Endothelial cell of umbilical vein (primary cell): ENCODE measurements at regions of chr6 and their contacts with region 1.

Region 1: DNA sequence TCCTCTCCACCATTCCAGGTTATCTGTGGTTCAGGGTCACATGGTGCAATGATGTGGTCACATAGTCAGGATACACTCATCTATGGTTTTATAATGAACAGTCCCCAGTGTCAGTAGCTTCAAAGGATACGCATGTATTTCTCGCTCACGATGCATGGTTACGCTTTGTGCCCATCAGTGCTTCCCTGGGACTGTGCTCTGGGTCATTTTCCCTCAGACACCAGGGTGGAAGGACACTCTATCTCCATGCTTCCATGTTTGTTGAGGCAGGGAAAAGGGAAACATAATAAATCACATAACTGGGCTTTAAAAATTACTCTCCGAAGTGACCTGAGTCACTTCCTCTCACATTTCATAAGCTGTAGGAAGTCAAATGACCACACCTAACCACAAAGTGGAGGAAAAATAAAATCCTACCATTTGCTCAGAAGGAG is 394.8 kb upstream of the NOX3 start:
- DNase-seq: peak; percentile 80
- H3K4me3 ChIP-seq: no peak overlapping the region
- H3K27ac ChIP-seq: peak overlapping the region; percentile 0
- H3K4me1 ChIP-seq: peaks cover 14% of the 10 kb centered on the region
- H3K27me3 ChIP-seq: no peaks in the 10 kb centered on the region
- CTCF ChIP-seq: no peak
- POLR2A ChIP-seq: no peak

Region 2: GRCh38 chr6:155828989-155829388 is 21.4 kb before region 1 on chr6:
- CTCF ChIA-PET with region 1: no interaction called
- POLR2A ChIA-PET with region 1: no interaction called
- dilution Hi-C with region 1: no loop called
- intact Hi-C with region 1: no loop called
- DNase-seq: no peak
- H3K4me3 ChIP-seq: no peak overlapping the region
- H3K27ac ChIP-seq: no peak overlapping the region
- H3K4me1 ChIP-seq: no peaks in the 10 kb centered on the region
- H3K27me3 ChIP-seq: no peaks in the 10 kb centered on the region
- CTCF ChIP-seq: no peak
- POLR2A ChIP-seq: no peak

Region 3: DNA sequence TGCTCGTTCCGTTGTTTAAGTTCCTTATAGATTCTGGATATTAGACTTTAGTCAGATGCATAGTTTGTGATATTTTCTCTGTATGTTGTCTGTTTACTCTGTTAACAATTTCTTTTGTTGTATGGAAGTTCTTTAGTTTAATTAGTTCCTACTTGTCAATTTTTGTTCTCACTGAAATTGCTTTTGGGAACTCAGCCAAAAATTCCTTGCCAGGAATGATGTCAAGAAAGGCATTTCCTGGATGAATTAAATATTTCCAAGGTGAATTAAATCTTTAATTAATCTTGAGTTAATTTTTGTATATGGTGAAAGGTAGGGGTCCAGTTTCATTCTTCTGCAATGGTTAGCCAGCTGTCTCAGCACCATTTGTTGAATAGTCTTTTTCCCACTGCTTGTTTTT is 11.4 kb after region 1 on chr6:
- CTCF ChIA-PET with region 1: no interaction called
- POLR2A ChIA-PET with region 1: no interaction called
- dilution Hi-C with region 1: no loop called
- intact Hi-C with region 1: loop called (anchors 1 kb)
- DNase-seq: peak; percentile 56
- H3K4me3 ChIP-seq: no peak overlapping the region
- H3K27ac ChIP-seq: no peak overlapping the region
- H3K4me1 ChIP-seq: peaks cover 4% of the 10 kb centered on the region
- H3K27me3 ChIP-seq: no peaks in the 10 kb centered on the region
- CTCF ChIP-seq: no peak
- POLR2A ChIP-seq: no peak

Region 4: GRCh38 chr6:155882527-155883333 is 32.3 kb after region 1 on chr6:
- CTCF ChIA-PET with region 1: interaction called, 3 read pairs
- POLR2A ChIA-PET with region 1: no interaction called
- dilution Hi-C with region 1: no loop called
- intact Hi-C with region 1: loop called (anchors 2 kb)
- DNase-seq: peak; percentile 60
- H3K4me3 ChIP-seq: no peak overlapping the region
- H3K27ac ChIP-seq: peak overlapping the region; percentile 53
- H3K4me1 ChIP-seq: peaks cover 43% of the 10 kb centered on the region
- H3K27me3 ChIP-seq: no peaks in the 10 kb centered on the region
- CTCF ChIP-seq: no peak
- POLR2A ChIP-seq: no peak